AG04450 (cell line): ENCODE measurements at regions of chr1 and their contacts with region 1.

Region 1: DNA sequence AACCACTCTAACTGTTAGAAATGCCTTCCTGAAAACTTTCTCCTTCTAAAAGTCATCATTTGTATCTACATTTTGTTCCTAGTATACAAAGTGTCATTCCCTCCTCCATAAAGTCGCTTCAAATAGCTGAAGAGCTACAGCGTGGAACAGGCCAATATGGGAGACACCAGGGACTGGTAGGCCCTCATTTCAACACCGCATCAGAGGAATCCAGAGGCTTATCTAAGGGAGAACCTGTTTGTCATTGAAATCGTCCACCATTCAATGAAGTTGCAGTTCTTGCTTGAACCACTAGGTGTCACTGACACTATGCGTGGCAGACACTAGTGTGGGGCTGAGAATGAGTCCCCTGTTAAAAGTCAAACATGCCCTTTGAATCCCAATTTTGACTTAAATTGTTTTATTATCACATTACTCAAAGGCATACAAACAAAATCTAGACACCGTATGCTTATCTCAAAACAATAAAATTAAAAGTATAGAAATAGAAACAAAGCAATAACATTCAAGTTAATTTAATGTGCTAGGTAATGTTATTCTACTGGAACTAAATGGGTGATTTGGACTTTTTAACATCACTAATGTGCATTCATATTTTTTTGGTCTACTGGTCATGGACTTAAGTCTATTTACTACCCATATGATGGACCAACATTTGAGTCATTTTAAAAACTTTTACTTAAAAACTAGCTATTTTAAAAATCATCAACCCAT is 182.3 kb downstream of the FCRL5 start:
- DNase-seq: peak; percentile 7
- H3K4me3 ChIP-seq: no peak overlapping the region
- H3K27ac ChIP-seq: no peak overlapping the region
- H3K27me3 ChIP-seq: no peaks in the 10 kb centered on the region
- CTCF ChIP-seq: peak; percentile 88

Region 2: GRCh38 chr1:157357111-157357510 is 12.9 kb before region 1 on chr1:
- CTCF ChIA-PET with region 1: interaction called, 13 read pairs
- POLR2A ChIA-PET with region 1: no interaction called
- DNase-seq: no peak
- H3K4me3 ChIP-seq: no peak overlapping the region
- H3K27ac ChIP-seq: no peak overlapping the region
- H3K27me3 ChIP-seq: peaks cover 17% of the 10 kb centered on the region
- CTCF ChIP-seq: no peak

Region 3: DNA sequence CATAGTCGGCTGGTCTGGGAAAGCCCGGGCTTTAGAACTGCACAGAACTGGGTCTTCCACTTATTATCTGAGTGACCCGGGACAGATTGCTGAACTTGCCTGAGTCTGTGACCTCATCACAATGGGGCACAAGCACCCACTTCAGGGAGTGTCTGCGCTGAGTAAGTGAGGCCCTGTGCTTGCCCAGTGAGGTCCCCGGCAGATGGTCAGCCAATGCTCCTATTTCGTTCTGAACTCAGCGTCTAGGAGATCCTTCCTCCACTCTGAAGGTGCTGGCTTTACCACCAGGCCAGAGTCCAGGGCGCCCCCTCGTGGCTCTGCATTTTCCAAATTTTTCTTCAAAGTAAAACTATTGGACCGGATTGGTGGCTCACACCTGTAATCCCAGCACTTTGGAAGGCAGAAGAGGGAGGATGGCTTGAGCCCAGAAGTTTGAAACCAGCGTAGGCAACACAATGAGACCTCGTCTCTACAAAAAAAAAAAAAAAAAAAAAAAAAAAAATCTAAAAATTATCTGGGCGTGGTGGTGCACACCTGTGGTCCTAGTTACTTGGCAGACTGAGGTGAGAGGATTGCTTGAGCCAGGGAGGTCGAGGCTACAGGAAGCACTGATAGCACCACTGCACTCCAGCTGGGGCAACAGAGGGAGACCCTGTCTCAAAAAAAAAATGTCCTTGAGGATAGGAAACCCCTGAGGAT is 120.7 kb after region 1 on chr1:
- CTCF ChIA-PET with region 1: interaction called, 12 read pairs
- POLR2A ChIA-PET with region 1: no interaction called
- DNase-seq: no peak
- H3K4me3 ChIP-seq: no peak overlapping the region
- H3K27ac ChIP-seq: no peak overlapping the region
- H3K27me3 ChIP-seq: no peaks in the 10 kb centered on the region
- CTCF ChIP-seq: peak; percentile 64

Region 4: DNA sequence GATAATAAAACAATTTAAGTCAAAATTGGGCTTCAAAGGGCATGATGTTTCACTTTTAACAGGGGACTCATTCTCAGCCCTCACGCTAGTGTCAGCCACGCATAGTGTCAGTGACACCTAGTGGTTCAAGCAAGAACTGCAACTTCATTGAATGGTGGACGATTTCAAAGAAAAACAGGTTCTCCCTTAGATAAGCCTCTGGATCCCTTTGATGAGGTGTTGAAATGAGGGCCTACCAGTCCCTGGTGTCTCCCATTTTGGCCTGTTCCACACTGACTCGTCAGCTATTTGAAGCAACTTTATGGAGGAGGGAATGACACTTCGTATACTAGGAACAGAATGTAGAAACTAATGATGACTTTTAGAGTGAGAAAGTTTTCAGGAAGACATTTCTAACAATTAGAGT is 126.2 kb after region 1 on chr1:
- CTCF ChIA-PET with region 1: interaction called, 12 read pairs
- POLR2A ChIA-PET with region 1: no interaction called
- DNase-seq: no peak
- H3K4me3 ChIP-seq: no peak overlapping the region
- H3K27ac ChIP-seq: no peak overlapping the region
- H3K27me3 ChIP-seq: no peaks in the 10 kb centered on the region
- CTCF ChIP-seq: peak; percentile 88

Region 5: DNA sequence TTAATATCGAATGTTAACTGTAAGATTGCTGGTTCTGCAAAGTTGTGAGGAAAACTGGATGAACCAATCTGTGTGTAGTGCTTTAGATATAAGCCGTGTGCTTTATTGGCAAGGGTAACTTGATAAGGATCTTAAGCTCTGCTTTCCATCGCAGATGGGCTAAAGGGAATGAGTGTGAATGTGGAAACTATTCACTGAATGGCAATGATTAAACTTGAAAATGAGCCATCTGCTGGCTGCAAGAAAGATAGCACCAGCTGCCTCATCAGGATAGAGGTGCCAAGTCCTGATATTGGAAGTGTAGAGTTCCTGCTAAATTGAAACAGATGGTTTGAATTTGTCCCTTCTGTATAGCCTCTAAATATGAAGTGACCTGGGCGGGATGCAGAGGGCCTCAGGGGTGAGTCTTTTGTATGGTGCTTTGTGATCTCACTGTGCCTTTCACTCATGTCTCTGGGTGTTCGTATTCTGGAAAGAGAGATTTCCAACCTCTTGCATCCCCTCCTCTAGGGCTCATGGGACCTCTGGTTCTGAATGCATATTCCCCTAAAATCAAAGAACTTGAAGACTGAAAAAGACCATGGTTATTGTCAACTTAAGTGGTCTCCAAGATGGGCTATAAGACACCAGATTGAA is 321.4 kb after region 1 on chr1:
- CTCF ChIA-PET with region 1: no interaction called
- POLR2A ChIA-PET with region 1: no interaction called
- DNase-seq: no peak
- H3K4me3 ChIP-seq: no peak overlapping the region
- H3K27ac ChIP-seq: no peak overlapping the region
- H3K27me3 ChIP-seq: no peaks in the 10 kb centered on the region
- CTCF ChIP-seq: peak; percentile 55